Activated CD8-positive, alpha-beta T cell treated with anti-CD3 and anti-CD28 coated beads for 36 hours (primary cell): ENCODE measurements at regions of chr19 and their contacts with region 1.

Region 1: DNA sequence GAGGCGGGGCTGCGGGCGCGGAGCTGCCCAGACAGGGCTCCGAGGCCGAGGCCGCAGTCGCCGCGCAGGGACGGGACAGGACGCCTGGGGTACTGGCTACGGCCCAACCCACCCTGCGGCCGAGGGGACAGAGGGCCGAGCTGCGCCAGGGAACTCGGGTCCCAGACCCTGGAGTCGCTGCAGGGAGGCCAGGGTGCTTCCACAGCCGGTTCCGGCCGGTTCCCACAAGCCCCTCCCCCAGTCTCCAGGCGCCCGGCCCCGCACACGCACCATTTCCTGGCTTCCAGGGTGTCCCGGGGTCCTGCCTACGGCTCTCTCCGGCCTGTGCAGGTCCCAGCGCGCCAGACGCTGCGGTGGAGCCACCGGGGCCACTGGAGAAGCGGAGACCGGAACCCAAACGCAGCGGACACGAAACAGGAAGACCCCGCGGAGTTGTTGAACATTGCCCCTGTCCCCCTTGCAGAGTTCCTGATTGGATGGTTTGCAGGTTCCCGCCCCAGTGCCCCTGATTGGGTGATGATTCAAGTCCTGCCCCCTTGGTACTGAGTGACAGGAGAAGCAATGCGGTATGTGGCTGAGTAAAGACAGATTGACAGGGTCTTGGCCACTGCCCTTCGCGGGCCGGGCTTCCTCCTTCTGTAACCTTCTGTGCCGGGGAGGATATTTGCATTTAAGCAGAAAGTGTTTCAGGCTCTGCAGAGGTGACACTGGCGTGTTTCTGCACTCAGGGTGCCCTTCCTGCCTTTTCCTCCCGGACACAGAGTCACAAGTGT is at the start of gene ZNF564:
- DNase-seq: peak; percentile 97
- ATAC-seq: peak; percentile 99
- H3K4me3 Mint-ChIP-seq: peak within 1 kb of the TSS; percentile 84
- H3K27ac Mint-ChIP-seq: peak within 1 kb of the TSS; percentile 86
- H3K4me1 Mint-ChIP-seq: peaks cover 30% of the 10 kb centered on the region
- H3K27me3 Mint-ChIP-seq: no peaks in the 10 kb centered on the region
- CTCF ChIP-seq: no peak
- total RNA-seq, gene ZNF564: 6.2 to 7.4 TPM

Region 2: GRCh38 chr19:12564016-12564664 is 12.9 kb after region 1 on chr19:
- CTCF ChIA-PET with region 1: interaction called, 14 read pairs
- POLR2A ChIA-PET with region 1: interaction called, 6 read pairs
- intact Hi-C with region 1: no loop called
- DNase-seq: peak; percentile 96
- ATAC-seq: peak; percentile 99
- H3K4me3 Mint-ChIP-seq: no peak overlapping the region
- H3K27ac Mint-ChIP-seq: no peak overlapping the region
- H3K4me1 Mint-ChIP-seq: peaks cover 4% of the 10 kb centered on the region
- H3K27me3 Mint-ChIP-seq: no peaks in the 10 kb centered on the region
- CTCF ChIP-seq: peak; percentile 85

Region 3: DNA sequence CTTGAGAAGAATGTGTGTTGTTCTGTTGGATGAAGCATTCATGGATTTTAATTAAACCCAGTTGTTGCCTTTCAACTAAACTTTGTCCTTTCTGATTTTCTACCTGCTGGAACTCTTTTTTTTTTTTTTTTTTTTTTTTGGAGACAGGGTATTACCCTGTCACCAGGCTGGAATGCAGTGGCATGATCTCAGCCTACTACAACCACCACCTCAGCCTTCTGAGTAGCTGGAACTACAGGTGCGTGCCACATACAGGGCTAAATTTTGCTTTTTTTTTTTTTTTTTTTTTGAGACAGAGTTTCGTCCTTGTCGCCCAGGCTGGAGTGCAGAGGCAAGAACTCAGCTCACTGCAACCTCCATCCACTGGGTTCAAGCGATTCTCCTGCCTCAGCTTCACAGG is 66.4 kb after region 1 on chr19:
- CTCF ChIA-PET with region 1: no interaction called
- POLR2A ChIA-PET with region 1: no interaction called
- intact Hi-C with region 1: no loop called
- DNase-seq: no peak
- ATAC-seq: no peak
- H3K4me3 Mint-ChIP-seq: no peak overlapping the region
- H3K27ac Mint-ChIP-seq: no peak overlapping the region
- H3K4me1 Mint-ChIP-seq: peaks cover 30% of the 10 kb centered on the region
- H3K27me3 Mint-ChIP-seq: no peaks in the 10 kb centered on the region
- CTCF ChIP-seq: no peak

Region 4: DNA sequence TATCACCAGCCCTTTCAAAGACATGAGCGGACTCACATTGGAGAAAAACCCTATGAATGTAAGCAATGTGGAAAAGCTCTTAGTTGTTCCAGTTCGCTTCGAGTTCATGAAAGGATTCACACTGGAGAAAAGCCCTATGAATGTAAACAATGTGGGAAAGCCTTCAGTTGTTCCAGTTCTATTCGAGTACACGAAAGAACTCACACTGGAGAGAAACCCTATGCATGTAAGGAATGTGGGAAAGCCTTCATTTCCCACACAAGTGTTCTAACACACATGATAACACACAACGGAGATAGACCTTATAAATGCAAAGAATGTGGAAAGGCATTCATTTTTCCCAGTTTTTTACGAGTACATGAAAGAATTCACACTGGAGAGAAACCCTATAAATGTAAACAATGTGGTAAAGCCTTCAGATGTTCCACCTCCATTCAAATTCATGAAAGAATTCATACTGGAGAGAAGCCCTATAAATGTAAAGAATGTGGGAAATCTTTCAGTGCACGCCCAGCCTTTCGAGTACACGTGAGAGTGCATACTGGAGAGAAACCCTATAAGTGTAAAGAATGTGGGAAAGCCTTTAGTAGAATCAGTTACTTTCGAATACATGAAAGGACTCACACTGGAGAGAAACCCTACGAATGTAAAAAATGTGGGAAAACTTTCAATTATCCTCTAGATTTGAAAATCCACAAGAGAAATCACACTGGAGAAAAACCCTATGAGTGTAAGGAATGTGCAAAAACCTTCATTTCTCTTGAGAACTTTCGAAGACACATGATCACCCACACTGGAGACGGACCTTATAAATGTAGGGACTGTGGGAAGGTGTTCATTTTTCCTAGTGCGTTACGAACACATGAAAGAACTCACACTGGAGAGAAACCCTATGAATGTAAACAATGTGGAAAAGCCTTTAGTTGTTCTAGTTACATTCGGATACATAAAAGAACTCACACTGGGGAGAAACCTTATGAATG is 77.1 kb after region 1 on chr19:
- CTCF ChIA-PET with region 1: no interaction called
- POLR2A ChIA-PET with region 1: no interaction called
- intact Hi-C with region 1: no loop called
- DNase-seq: no peak
- ATAC-seq: no peak
- H3K4me3 Mint-ChIP-seq: no peak overlapping the region
- H3K27ac Mint-ChIP-seq: no peak overlapping the region
- H3K4me1 Mint-ChIP-seq: peaks cover 8% of the 10 kb centered on the region
- H3K27me3 Mint-ChIP-seq: no peaks in the 10 kb centered on the region
- CTCF ChIP-seq: no peak